Naive thymus-derived CD4-positive, alpha-beta T cell (primary cell): ENCODE measurements at regions of chr17 and their contacts with region 1.

Region 1: GRCh38 chr17:66255112-66255511 is 25.9 kb upstream of the APOH start:
- DNase-seq: peak in 7 of 9 donors; percentile 60 to 80 (median 73)
- ATAC-seq: peak; percentile 92
- H3K4me3 ChIP-seq: peak overlapping the region; percentile 1
- H3K4me3 Mint-ChIP-seq: peak overlapping the region; percentile 30 to 80 (median 65)
- H3K27ac ChIP-seq: peak overlapping the region; percentile 52
- H3K27ac Mint-ChIP-seq: peak overlapping the region; percentile 44 to 93 (median 89)
- H3K4me1 ChIP-seq: peaks cover 5 to 17% of the 10 kb centered on the region in 2 donors
- H3K4me1 Mint-ChIP-seq: peaks cover 8 to 34% (median 24%) of the 10 kb centered on the region in 7 donors
- H3K27me3 ChIP-seq: no peaks in the 10 kb centered on the region
- H3K27me3 Mint-ChIP-seq: no peaks in the 10 kb centered on the region

Region 2: GRCh38 chr17:66200685-66201092 is 54.4 kb before region 1 on chr17:
- CTCF ChIA-PET with region 1: interaction called, 10 read pairs
- POLR2A ChIA-PET with region 1: no interaction called
- intact Hi-C with region 1: loop called (anchors 1 to 2 kb)
- DNase-seq: peak in 7 of 9 donors; percentile 20 to 57 (median 55)
- ATAC-seq: peak; percentile 66
- H3K4me3 ChIP-seq: no peak overlapping the region
- H3K4me3 Mint-ChIP-seq: peak overlapping the region in 6 of 10 donors; percentile 21 to 66 (median 44)
- H3K27ac ChIP-seq: no peak overlapping the region
- H3K27ac Mint-ChIP-seq: peak overlapping the region in 8 of 9 donors; percentile 25 to 89 (median 69)
- H3K4me1 ChIP-seq: peaks cover 0 to 17% of the 10 kb centered on the region in 2 donors
- H3K4me1 Mint-ChIP-seq: peaks cover 12 to 26% (median 21%) of the 10 kb centered on the region in 7 donors
- H3K27me3 ChIP-seq: no peaks in the 10 kb centered on the region
- H3K27me3 Mint-ChIP-seq: peaks cover 0 to 4% (median 0%) of the 10 kb centered on the region in 5 donors

Region 3: GRCh38 chr17:66290101-66290722 is 35.1 kb after region 1 on chr17:
- CTCF ChIA-PET with region 1: no interaction called
- POLR2A ChIA-PET with region 1: interaction called, 3 read pairs
- intact Hi-C with region 1: loop called in 1 of 2 experiments (anchors 1 kb)
- DNase-seq: no peak
- ATAC-seq: no peak
- H3K4me3 ChIP-seq: no peak overlapping the region
- H3K4me3 Mint-ChIP-seq: peak overlapping the region in 2 of 10 donors; percentile 11 to 59
- H3K27ac ChIP-seq: no peak overlapping the region
- H3K27ac Mint-ChIP-seq: peak overlapping the region in 1 of 9 donors; percentile 63
- H3K4me1 ChIP-seq: peaks cover 6 to 30% of the 10 kb centered on the region in 2 donors
- H3K4me1 Mint-ChIP-seq: peaks cover 18 to 51% (median 34%) of the 10 kb centered on the region in 7 donors
- H3K27me3 ChIP-seq: no peaks in the 10 kb centered on the region
- H3K27me3 Mint-ChIP-seq: no peaks in the 10 kb centered on the region

Region 4: DNA sequence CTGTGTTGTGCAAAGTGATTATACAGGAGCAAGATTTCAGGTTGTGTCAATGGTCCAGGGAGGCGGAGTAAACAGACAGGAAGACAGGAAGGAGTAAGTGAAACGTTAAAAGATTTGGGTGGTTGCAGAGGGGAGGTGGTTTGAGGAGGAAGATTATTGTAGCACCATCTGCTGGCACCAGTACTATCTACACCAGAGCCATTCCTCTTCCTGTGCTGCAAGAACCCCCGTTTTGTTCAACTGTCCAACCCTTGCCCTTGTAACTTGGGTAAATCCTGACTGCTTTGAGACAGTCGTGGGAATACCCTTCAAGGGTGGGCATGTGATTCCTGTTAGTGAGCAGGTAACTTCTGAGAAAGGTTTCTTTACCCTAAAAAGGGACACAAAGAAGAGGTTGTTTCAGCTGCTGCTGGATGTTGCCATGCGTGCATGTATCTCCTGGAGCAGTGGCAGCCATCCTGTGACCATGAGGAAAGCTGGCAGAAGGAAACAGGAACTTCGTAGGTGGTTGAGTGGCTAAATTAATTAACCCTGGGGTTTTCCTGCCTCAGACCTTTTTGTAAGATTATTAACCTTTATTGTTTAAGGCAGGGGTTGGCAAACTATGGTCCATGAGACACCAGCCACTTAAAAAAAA is 171.4 kb after region 1 on chr17:
- CTCF ChIA-PET with region 1: interaction called, 10 read pairs
- POLR2A ChIA-PET with region 1: interaction called, 3 read pairs
- intact Hi-C with region 1: loop called (anchors 1 kb)
- DNase-seq: peak in 8 of 9 donors; percentile 31 to 74 (median 64)
- ATAC-seq: peak; percentile 94
- H3K4me3 ChIP-seq: no peak overlapping the region
- H3K4me3 Mint-ChIP-seq: peak overlapping the region in 9 of 10 donors; percentile 4 to 68 (median 47)
- H3K27ac ChIP-seq: peak overlapping the region; percentile 30
- H3K27ac Mint-ChIP-seq: peak overlapping the region; percentile 56 to 91 (median 79)
- H3K4me1 ChIP-seq: peaks cover 0 to 28% of the 10 kb centered on the region in 2 donors
- H3K4me1 Mint-ChIP-seq: peaks cover 54 to 81% (median 72%) of the 10 kb centered on the region in 7 donors
- H3K27me3 ChIP-seq: no peaks in the 10 kb centered on the region
- H3K27me3 Mint-ChIP-seq: no peaks in the 10 kb centered on the region

Region 5: DNA sequence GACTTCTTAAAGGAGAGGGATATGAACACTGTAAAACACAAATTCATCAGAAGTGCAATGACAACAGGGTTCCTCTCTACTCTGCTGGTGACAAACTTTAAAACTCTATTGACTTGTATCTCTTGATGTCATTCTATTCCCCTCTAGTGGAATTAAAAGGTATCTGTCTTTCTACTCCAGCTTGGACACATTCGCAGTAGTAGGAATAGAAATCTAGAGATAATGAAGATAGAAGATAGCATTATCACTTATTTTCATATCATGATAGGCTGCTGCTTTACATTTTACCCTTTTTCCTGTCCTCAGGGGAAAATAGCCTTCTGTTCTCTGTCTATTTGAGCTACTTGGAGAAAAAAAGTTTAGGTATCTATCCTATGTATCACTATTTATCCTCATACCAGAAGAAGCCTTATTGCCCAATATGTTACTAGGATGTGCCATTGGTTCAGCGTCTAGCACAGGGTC is 370.2 kb after region 1 on chr17:
- CTCF ChIA-PET with region 1: no interaction called
- POLR2A ChIA-PET with region 1: no interaction called
- intact Hi-C with region 1: loop called (anchors 1 to 5 kb)
- DNase-seq: peak in 2 of 9 donors; percentile 20 to 28
- ATAC-seq: no peak
- H3K4me3 ChIP-seq: no peak overlapping the region
- H3K4me3 Mint-ChIP-seq: peak overlapping the region in 1 of 10 donors; percentile 2
- H3K27ac ChIP-seq: no peak overlapping the region
- H3K27ac Mint-ChIP-seq: peak overlapping the region in 2 of 9 donors; percentile 9 to 77
- H3K4me1 ChIP-seq: no peaks in the 10 kb centered on the region
- H3K4me1 Mint-ChIP-seq: peaks cover 19 to 87% (median 73%) of the 10 kb centered on the region in 7 donors
- H3K27me3 ChIP-seq: no peaks in the 10 kb centered on the region
- H3K27me3 Mint-ChIP-seq: no peaks in the 10 kb centered on the region

Region 6: DNA sequence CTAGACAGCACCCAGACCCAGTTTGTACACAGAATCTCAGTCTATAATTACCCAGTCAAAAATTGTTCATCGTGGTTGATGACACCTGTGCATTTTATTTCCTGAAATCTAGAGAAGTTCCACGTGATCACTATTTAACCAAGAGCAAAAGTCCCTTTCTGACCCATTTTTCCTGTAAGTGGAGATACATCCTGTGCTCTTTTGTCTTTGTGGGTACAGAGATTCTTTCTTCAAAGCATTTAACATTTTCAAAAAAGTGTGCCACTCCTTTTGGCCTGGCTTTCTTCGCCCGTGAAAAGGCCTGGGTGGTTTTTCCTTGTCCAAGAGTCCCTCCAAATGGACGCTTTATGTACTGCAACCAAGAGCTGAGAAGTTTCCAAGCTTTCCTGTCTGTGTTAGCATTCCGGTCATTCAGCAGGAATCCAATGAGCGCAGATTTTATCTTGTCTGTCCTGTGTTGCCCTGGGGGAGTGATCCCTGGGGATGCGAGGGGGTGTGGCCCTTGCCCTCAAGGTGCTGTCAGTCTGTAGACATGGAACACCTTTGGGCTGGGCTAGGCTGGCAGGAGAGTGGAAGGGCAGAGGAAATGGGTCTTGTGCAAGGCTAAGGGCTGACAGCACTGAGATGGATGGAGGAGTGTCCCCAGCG is 418.7 kb after region 1 on chr17:
- CTCF ChIA-PET with region 1: no interaction called
- POLR2A ChIA-PET with region 1: no interaction called
- intact Hi-C with region 1: loop called (anchors 1 kb)
- DNase-seq: peak in 8 of 9 donors; percentile 32 to 87 (median 78)
- ATAC-seq: peak; percentile 92
- H3K4me3 ChIP-seq: no peak overlapping the region
- H3K4me3 Mint-ChIP-seq: peak overlapping the region; percentile 39 to 84 (median 74)
- H3K27ac ChIP-seq: peak overlapping the region; percentile 59
- H3K27ac Mint-ChIP-seq: peak overlapping the region; percentile 88 to 98 (median 92)
- H3K4me1 ChIP-seq: peaks cover 18 to 45% of the 10 kb centered on the region in 2 donors
- H3K4me1 Mint-ChIP-seq: peaks cover 38 to 79% (median 64%) of the 10 kb centered on the region in 7 donors
- H3K27me3 ChIP-seq: no peaks in the 10 kb centered on the region
- H3K27me3 Mint-ChIP-seq: no peaks in the 10 kb centered on the region

Region 7: DNA sequence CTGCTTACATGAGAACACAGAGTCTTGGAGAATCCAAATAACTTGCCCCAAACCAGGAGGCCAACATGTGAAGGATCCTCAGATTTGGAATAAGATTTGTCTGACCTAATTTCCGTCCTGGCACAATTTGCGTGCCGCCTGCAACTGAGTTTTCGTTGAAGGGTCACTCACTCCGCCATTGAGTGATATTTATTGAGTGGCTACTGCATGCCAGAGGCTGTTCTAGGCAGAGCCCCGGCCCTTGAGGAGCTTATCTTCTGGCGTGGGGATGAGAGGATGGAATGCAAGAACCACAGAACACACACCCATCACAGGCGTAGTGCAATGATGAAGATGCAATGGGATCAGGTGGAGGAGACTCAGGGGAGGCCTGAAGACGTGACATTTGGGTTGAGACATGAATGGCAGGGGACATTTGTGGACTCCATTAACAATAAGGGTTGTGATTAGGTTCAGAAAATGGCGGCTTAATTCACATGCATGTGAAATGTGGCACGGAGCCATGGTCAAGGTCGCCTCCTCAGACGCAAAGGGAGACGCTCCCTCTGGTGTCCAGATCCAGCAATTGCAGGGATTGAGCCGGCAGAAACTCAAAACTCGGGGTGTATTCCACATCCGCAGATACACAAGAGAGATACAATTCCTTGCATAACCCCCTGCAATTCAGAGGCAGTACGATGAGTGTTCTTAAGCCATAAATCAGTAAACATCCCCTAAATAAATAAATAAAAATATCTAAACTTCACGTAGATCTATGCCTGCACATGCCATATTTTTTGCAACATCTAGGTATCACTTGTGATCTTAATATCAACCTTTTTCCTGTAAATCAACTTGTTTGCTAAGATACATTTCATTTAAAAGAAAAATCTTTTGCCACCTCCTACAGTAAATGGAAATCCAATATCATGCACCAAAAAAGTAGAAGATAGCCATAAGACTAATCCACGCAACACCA is 651.5 kb after region 1 on chr17:
- CTCF ChIA-PET with region 1: no interaction called
- POLR2A ChIA-PET with region 1: no interaction called
- intact Hi-C with region 1: loop called (anchors 1 to 5 kb)
- DNase-seq: peak; percentile 15 to 64 (median 51)
- ATAC-seq: peak; percentile 76
- H3K4me3 ChIP-seq: no peak overlapping the region
- H3K4me3 Mint-ChIP-seq: peak overlapping the region in 1 of 10 donors; percentile 4
- H3K27ac ChIP-seq: no peak overlapping the region
- H3K27ac Mint-ChIP-seq: peak overlapping the region in 2 of 9 donors; percentile 25 to 27
- H3K4me1 ChIP-seq: no peaks in the 10 kb centered on the region
- H3K4me1 Mint-ChIP-seq: peaks cover 0 to 9% (median 6%) of the 10 kb centered on the region in 7 donors
- H3K27me3 ChIP-seq: peaks cover 0 to 4% of the 10 kb centered on the region in 2 donors
- H3K27me3 Mint-ChIP-seq: peaks cover 0 to 12% (median 6%) of the 10 kb centered on the region in 5 donors